WTC11 (cell line): ENCODE measurements at regions of chr4 and their contacts with region 1.

Region 1: DNA sequence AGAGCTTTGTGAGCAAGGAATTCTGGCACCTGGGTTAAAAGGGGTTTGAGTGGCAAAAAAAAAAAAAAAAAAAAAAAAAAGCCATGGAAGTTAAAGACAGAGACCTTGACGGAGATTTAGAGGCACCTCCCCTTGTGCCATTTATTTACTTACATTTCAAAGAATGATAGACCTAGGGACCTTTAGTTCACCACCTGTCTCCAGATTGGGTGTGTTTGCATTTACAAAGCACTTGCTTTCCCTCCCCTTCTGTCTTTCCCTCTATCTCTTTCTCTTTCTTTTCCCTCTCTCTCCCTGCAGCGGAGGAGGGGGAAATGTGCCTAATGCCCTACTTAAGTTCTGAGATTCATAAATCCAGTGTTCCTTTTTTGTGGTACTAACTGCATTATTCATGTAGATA is 116.0 kb downstream of the IQCM start:
- DNase-seq: no peak
- ATAC-seq: peak; percentile 51
- H3K4me3 Mint-ChIP-seq: no peak overlapping the region
- H3K27ac Mint-ChIP-seq: no peak overlapping the region
- H3K4me1 Mint-ChIP-seq: peaks cover 17% of the 10 kb centered on the region
- H3K27me3 Mint-ChIP-seq: peaks cover 39% of the 10 kb centered on the region
- CTCF ChIP-seq: no peak

Region 2: GRCh38 chr4:148839586-148839985 is 860.1 kb before region 1 on chr4:
- CTCF ChIA-PET with region 1: no interaction called
- POLR2A ChIA-PET with region 1: interaction called, 13 read pairs
- DNase-seq: no peak
- ATAC-seq: no peak
- H3K4me3 Mint-ChIP-seq: no peak overlapping the region
- H3K27ac Mint-ChIP-seq: no peak overlapping the region
- H3K4me1 Mint-ChIP-seq: peaks cover 31% of the 10 kb centered on the region
- H3K27me3 Mint-ChIP-seq: no peaks in the 10 kb centered on the region
- CTCF ChIP-seq: no peak

Region 3: GRCh38 chr4:149719806-149720205 is 20.2 kb after region 1 on chr4:
- CTCF ChIA-PET with region 1: no interaction called
- POLR2A ChIA-PET with region 1: interaction called, 13 read pairs
- DNase-seq: no peak
- ATAC-seq: no peak
- H3K4me3 Mint-ChIP-seq: no peak overlapping the region
- H3K27ac Mint-ChIP-seq: no peak overlapping the region
- H3K4me1 Mint-ChIP-seq: no peaks in the 10 kb centered on the region
- H3K27me3 Mint-ChIP-seq: no peaks in the 10 kb centered on the region
- CTCF ChIP-seq: no peak

Region 4: GRCh38 chr4:149741186-149741831 is 41.7 kb after region 1 on chr4:
- CTCF ChIA-PET with region 1: no interaction called
- POLR2A ChIA-PET with region 1: no interaction called
- DNase-seq: no peak
- ATAC-seq: no peak
- H3K4me3 Mint-ChIP-seq: no peak overlapping the region
- H3K27ac Mint-ChIP-seq: no peak overlapping the region
- H3K4me1 Mint-ChIP-seq: peaks cover 7% of the 10 kb centered on the region
- H3K27me3 Mint-ChIP-seq: no peaks in the 10 kb centered on the region
- CTCF ChIP-seq: no peak